PC-3 (cell line): ENCODE measurements at regions of chr9 and their contacts with region 1.

Region 1: DNA sequence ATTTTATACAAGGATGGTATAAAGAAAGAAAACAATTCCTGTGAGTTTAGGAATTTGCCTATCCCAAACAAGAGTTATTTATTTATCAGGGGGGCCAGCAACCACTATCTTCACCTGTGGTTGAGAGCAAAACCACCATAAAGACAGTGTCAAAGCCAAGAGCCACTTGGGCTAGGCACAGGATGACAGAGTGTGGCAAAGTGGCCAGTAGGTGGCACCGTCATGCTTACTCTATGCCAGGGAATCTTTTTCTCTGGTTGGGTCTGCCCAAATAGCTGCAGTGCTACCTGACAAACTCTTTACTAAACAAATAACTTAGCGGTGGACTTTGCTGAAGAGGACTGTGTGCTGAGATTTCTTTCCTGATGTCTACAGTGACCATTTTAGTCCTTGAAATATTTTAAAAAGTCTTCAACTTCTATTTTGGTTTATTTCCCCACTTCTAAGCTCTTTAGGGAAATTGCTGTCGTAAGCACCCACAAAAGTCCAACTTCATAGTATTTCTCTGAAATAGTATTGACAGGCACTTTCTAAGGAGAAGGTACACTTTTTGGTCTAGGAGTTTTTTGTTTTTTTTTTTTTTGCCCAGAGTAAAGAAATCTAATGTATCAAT is 285.0 kb downstream of the RFX3 start:
- DNase-seq: peak; percentile 70
- ATAC-seq: peak; percentile 96
- H3K4me3 ChIP-seq: no peak overlapping the region
- H3K27ac ChIP-seq: no peak overlapping the region
- H3K4me1 ChIP-seq: no peaks in the 10 kb centered on the region
- H3K27me3 ChIP-seq: no peaks in the 10 kb centered on the region
- CTCF ChIP-seq: peak; percentile 80

Region 2: DNA sequence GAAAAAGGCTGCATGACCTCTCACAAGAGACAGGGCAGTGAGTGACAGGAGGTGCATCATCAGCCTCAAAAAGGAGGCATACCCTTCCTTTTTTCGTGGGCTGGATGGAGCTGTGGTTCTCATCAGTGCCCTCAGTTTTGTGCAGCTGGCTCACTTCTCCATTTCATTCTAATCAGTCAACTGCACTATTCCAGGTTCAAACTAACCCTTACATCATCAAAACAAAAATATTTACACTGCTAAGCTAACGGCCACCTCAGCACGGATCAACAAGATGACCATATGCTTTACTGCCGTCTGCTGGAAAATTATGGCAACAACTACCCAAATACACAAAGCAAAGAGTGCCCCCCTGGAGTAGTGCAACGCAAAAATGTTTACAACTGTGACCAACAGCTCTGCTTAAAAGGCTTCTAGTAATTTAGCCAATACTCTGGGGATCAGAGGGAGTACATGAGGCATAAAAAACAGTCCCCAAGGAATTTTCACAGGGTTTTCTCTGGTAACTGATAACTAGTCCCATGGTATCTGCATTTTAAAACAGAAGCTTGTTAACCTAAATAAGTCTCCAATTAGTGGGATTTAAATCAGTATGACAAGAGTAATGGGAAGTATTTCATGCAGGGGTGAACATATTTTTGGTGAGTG is 512.7 kb before region 1 on chr9:
- CTCF ChIA-PET with region 1: no interaction called
- POLR2A ChIA-PET with region 1: no interaction called
- intact Hi-C with region 1: no loop called
- DNase-seq: peak; percentile 69
- ATAC-seq: peak; percentile 78
- H3K4me3 ChIP-seq: no peak overlapping the region
- H3K27ac ChIP-seq: no peak overlapping the region
- H3K4me1 ChIP-seq: no peaks in the 10 kb centered on the region; the same call in 1 of the 2 replicates
- H3K27me3 ChIP-seq: no peaks in the 10 kb centered on the region
- CTCF ChIP-seq: peak; percentile 87

Region 3: DNA sequence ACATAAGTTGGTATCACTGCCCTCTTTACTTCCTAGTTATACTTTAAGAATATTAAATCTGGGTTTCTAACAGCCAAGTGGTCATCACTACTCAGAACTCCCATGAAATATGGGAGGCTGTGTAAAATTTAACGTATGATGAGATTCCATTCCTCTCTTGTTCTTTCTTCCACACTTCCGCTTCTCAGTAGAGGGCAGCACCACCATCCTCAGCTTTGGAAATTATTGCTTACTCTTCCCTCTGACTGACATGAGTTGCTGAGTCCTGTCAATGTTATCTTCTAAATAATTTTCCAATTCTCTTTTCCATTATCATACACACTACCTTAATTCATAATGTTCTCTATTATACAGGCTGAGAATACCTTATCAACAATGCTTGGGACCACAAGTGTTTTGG is 91.1 kb after region 1 on chr9:
- CTCF ChIA-PET with region 1: interaction called, 3 read pairs
- POLR2A ChIA-PET with region 1: no interaction called
- intact Hi-C with region 1: loop called (anchors 5 kb)
- DNase-seq: peak; percentile 45
- ATAC-seq: no peak
- H3K4me3 ChIP-seq: no peak overlapping the region
- H3K27ac ChIP-seq: no peak overlapping the region
- H3K4me1 ChIP-seq: peaks cover 23% of the 10 kb centered on the region
- H3K27me3 ChIP-seq: no peaks in the 10 kb centered on the region
- CTCF ChIP-seq: peak; percentile 63

Region 4: GRCh38 chr9:3441197-3441816 is 200.5 kb after region 1 on chr9:
- CTCF ChIA-PET with region 1: interaction called, 41 read pairs
- POLR2A ChIA-PET with region 1: no interaction called
- intact Hi-C with region 1: loop called (anchors 1 kb)
- DNase-seq: peak; percentile 63
- ATAC-seq: peak; percentile 56
- H3K4me3 ChIP-seq: no peak overlapping the region
- H3K27ac ChIP-seq: no peak overlapping the region
- H3K4me1 ChIP-seq: no peaks in the 10 kb centered on the region
- H3K27me3 ChIP-seq: no peaks in the 10 kb centered on the region
- CTCF ChIP-seq: peak; percentile 69

Region 5: GRCh38 chr9:3513265-3513818 is 272.6 kb after region 1 on chr9:
- CTCF ChIA-PET with region 1: no interaction called
- POLR2A ChIA-PET with region 1: no interaction called
- intact Hi-C with region 1: loop called (anchors 5 kb)
- DNase-seq: no peak
- ATAC-seq: no peak
- H3K4me3 ChIP-seq: no peak overlapping the region
- H3K27ac ChIP-seq: no peak overlapping the region
- H3K4me1 ChIP-seq: peaks cover 20% of the 10 kb centered on the region
- H3K27me3 ChIP-seq: no peaks in the 10 kb centered on the region
- CTCF ChIP-seq: no peak

Region 6: DNA sequence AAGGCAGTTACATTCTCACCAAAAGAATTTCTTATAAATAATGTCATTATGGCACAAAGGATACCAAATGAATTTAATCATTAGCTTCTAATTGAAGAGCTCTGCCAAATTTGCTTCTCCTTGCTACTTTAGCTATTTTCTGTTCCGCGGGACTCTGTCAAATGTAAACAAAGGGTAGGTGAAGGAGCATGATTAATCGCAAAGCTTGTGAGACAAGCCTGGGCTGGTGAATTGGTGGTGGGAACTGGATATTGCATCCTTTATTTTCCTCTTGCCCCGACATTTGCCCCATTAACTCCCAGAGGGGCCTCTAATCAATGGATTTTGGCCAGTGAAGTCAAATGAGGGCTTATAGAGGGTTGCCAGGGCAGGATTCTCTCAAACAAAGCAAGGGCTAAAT is 519.3 kb after region 1 on chr9:
- CTCF ChIA-PET with region 1: no interaction called
- POLR2A ChIA-PET with region 1: no interaction called
- intact Hi-C with region 1: no loop called
- DNase-seq: peak; percentile 64
- ATAC-seq: peak; percentile 64
- H3K4me3 ChIP-seq: peak overlapping the region; percentile 28; the same call in 1 of the 2 replicates
- H3K27ac ChIP-seq: peak overlapping the region; percentile 11; the same call in 1 of the 2 replicates
- H3K4me1 ChIP-seq: peaks cover 19% of the 10 kb centered on the region
- H3K27me3 ChIP-seq: no peaks in the 10 kb centered on the region
- CTCF ChIP-seq: no peak